Activated CD8-positive, alpha-beta memory T cell treated with anti-CD3 and anti-CD28 coated beads, Interleukin-2, amount 10 ng/mL, durations not matched to agents 7 days and 5 days (primary cell): ENCODE measurements at regions of chr2 and their contacts with region 1.

Region 1: DNA sequence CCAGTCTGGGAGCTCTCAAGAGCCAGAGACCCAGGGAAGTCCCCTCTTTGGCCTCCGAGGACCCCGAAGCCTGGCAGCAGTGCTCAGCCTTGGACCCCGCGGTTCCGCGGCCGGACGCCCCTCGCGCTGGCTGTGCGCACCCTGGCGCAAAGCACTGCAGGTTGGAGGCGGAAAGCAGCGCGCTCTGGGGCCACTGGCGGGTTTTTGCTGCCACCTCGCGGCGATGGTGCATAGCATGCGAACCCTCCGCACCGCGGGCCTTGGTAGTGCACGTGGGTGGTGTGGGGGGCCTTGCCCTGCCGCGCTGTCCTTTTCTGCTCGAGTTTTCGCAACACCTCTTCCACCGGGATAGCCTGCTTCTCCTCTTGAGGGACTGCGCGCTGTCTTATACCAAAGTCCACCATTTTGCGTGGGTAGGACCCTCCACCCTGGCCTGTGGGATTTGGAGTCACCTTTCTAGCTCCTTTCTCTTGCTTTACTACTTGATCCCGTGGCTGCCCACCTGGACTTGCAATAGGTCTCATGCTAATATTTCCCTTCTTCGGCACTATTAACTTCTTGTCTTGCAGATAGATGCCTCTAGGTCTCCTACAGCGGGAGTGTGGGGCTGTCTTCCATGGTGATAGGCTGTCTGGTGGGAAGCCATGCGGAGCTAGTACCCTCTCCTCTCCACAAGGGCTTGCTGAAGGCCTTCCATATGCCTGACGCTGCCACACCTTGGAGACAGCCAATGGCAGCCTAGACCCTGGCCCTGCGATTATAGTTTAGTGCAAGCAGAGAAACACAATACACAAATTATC is 14.3 kb downstream of the SIX3 start:
- DNase-seq: peak; percentile 83
- ATAC-seq: peak; percentile 75
- H3K4me3 Mint-ChIP-seq: no peak overlapping the region
- H3K27ac Mint-ChIP-seq: no peak overlapping the region
- H3K4me1 Mint-ChIP-seq: peaks cover 14% of the 10 kb centered on the region
- H3K27me3 Mint-ChIP-seq: peaks cover 73% of the 10 kb centered on the region

Region 2: GRCh38 chr2:44392338-44392943 is 563.4 kb before region 1 on chr2:
- CTCF ChIA-PET with region 1: interaction called, 11 read pairs
- DNase-seq: peak; percentile 54
- ATAC-seq: no peak
- H3K4me3 Mint-ChIP-seq: no peak overlapping the region
- H3K27ac Mint-ChIP-seq: no peak overlapping the region
- H3K4me1 Mint-ChIP-seq: no peaks in the 10 kb centered on the region
- H3K27me3 Mint-ChIP-seq: no peaks in the 10 kb centered on the region

Region 3: DNA sequence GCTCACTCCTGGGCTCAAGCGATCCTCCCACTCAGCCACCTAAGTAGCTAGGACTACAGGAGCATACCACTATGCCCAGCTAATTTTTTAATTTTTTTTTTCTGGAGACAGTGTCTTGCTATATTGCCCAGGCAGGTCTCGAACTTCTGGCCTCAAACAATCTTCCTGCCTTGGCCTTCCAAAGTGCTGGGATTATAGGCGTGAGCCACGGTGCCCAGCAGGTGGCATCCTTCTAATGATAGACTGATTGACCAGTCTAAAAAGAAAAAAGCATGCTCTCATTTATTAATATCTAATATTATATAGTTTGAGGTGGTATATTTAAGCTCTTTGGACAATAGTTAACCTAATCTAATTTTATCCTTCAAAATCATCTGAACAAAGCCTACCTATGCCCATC is 395.4 kb before region 1 on chr2:
- CTCF ChIA-PET with region 1: interaction called, 20 read pairs
- DNase-seq: no peak
- ATAC-seq: no peak
- H3K4me3 Mint-ChIP-seq: no peak overlapping the region
- H3K27ac Mint-ChIP-seq: no peak overlapping the region
- H3K4me1 Mint-ChIP-seq: no peaks in the 10 kb centered on the region
- H3K27me3 Mint-ChIP-seq: no peaks in the 10 kb centered on the region

Region 4: GRCh38 chr2:44916291-44916690 is 39.5 kb before region 1 on chr2:
- CTCF ChIA-PET with region 1: no interaction called
- DNase-seq: no peak
- ATAC-seq: no peak
- H3K4me3 Mint-ChIP-seq: no peak overlapping the region
- H3K27ac Mint-ChIP-seq: no peak overlapping the region
- H3K4me1 Mint-ChIP-seq: peaks cover 2% of the 10 kb centered on the region
- H3K27me3 Mint-ChIP-seq: peaks cover 33% of the 10 kb centered on the region

Region 5: GRCh38 chr2:44928483-44929158 is 27.2 kb before region 1 on chr2:
- CTCF ChIA-PET with region 1: interaction called, 10 read pairs
- DNase-seq: no peak
- ATAC-seq: no peak
- H3K4me3 Mint-ChIP-seq: no peak overlapping the region
- H3K27ac Mint-ChIP-seq: peak overlapping the region; percentile 57
- H3K4me1 Mint-ChIP-seq: peaks cover 17% of the 10 kb centered on the region
- H3K27me3 Mint-ChIP-seq: peaks cover 87% of the 10 kb centered on the region